OCI-LY7 (cell line): ENCODE measurements at regions of chr22 and their contacts with region 1.

Region 1: DNA sequence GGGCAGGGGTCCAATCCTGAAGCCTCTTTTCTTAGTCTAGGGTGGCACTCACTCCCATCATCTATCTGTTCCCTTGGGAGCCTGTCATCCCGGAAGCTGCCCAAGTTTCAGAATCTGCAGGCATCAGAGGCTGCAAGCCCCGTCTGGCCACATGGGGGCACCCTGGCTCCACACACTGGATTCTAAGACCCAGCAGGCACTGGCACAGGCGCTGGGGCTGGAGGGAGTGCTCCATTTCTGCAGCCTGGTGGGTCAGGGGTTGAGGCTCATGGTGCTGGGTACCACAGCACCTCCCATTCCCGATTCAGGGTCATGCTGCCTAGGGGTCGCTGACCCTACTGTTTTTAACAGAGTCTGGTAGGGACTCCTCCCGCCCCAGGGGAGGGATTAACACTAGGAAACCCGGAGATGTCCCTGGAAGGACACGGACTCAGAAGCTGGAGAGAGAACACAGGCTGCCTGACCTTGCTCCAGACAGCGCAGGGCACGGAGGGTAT is 243.9 kb upstream of the SYN3 start:
- DNase-seq: peak; percentile 91
- H3K4me3 ChIP-seq: peak overlapping the region; percentile 10
- H3K27ac ChIP-seq: peak overlapping the region; percentile 100
- H3K4me1 ChIP-seq: peaks cover 65% of the 10 kb centered on the region
- CTCF ChIP-seq: peak; percentile 99

Region 2: DNA sequence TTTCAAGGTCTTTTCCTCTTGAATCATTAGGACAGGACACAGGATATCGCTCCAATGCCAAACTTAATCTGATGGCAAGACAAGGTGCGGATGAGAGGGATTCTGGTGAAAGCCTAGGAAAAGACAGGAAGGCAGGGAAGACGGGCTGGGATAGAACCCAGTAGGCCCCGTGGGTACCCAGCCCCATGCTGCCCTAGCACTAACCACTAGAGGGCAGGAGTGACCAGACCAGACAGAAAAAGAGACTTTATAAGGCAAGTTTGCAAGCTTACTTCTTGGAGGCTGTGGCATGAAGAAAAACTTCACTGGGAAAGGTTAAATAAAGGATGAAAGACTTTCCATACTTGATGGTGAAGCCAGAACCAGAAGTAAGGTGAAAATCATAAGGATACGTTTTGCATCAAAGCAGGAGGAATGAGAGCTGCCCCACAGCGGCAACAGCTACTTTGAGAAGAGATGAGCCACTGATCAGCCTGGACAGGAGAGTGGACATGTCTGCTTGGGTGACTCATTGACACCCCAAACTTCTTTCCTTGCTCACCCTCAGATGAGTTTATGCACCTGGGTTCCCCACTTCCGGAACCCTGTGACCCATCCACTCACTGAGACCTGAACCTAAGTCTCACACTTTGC is 283.7 kb before region 1 on chr22:
- CTCF ChIA-PET with region 1: no interaction called
- POLR2A ChIA-PET with region 1: no interaction called
- intact Hi-C with region 1: loop called (anchors 2 kb)
- DNase-seq: peak; percentile 71
- H3K4me3 ChIP-seq: no peak overlapping the region
- H3K27ac ChIP-seq: no peak overlapping the region
- H3K4me1 ChIP-seq: peaks cover 18% of the 10 kb centered on the region
- CTCF ChIP-seq: peak; percentile 98

Region 3: GRCh38 chr22:33314316-33314715 is 12.2 kb after region 1 on chr22:
- CTCF ChIA-PET with region 1: interaction called, 13 read pairs
- POLR2A ChIA-PET with region 1: interaction called, 12 read pairs
- intact Hi-C with region 1: loop called (anchors 2 kb)
- DNase-seq: no peak
- H3K4me3 ChIP-seq: no peak overlapping the region
- H3K27ac ChIP-seq: no peak overlapping the region
- H3K4me1 ChIP-seq: peaks cover 31% of the 10 kb centered on the region
- CTCF ChIP-seq: no peak

Region 4: GRCh38 chr22:33389936-33390335 is 87.8 kb after region 1 on chr22:
- CTCF ChIA-PET with region 1: no interaction called
- POLR2A ChIA-PET with region 1: no interaction called
- intact Hi-C with region 1: loop called (anchors 5 kb)
- DNase-seq: no peak
- H3K4me3 ChIP-seq: no peak overlapping the region
- H3K27ac ChIP-seq: no peak overlapping the region
- H3K4me1 ChIP-seq: no peaks in the 10 kb centered on the region
- CTCF ChIP-seq: no peak

Region 5: DNA sequence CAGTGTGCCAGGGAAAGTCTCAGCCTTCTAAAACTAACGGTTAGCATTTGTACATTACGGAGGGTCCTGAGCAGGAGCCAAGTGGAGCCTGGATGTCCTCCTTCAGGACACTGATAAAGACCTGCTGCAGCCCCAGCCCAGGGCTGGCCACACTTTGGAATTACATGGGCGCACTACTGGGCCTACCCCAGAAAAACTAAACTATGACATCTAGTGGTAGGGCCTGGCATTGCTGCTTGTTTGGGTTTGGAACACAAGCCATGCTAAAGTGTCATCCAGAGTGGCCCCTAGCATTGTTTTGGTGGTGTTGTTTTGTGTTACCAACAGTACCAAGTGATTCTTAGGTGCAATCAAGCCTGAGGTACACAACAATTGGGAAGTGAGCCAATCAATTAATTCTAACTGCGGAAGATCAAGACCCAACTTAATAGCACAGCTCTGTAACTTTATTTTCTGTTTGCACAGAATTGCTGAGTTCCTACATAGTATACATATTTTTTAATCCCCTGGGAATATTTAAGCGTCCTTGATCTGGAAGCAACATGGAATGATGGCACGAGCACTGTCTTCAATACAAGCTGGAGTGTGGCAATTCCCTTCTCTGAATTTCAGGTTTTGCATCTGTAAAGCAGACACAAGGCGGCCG is 277.5 kb after region 1 on chr22:
- CTCF ChIA-PET with region 1: interaction called, 5 read pairs
- POLR2A ChIA-PET with region 1: interaction called, 4 read pairs
- intact Hi-C with region 1: loop called (anchors 1 kb)
- DNase-seq: peak; percentile 80
- H3K4me3 ChIP-seq: no peak overlapping the region
- H3K27ac ChIP-seq: no peak overlapping the region
- H3K4me1 ChIP-seq: peaks cover 52% of the 10 kb centered on the region
- CTCF ChIP-seq: peak; percentile 98

Region 6: DNA sequence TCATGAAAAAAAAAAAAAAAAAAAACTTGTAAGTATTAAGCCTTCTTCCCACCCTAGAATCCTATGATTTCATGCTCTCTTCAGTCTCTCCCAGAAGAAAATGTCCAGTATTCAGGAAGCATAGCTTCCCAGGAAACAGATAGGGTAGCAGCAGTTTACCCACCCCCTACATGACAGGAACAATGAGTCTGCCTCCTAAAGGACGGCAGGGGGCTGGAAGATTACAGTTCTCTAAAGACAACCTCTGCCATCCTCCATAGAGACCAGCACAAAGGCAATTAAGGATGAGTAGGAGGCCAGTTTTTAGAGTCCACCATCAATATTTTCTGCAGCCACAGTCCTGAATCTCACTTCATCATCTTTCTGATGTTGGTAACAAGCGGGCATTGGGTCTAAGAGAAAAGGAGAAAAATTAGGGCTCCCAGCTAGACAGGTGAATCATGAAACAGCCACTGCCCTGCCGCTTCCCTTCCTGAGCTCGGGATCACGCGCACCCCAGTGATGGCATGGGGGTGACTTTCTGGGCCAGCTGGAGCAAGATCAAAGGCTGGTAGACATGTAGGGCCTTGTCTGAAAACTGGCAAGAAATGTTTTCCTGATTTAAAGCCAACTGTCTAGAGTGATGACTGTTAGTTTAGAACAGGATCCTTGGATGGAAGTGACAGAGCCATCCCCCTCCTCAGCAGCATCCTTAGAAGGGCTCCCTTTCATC is 295.3 kb after region 1 on chr22:
- CTCF ChIA-PET with region 1: no interaction called
- POLR2A ChIA-PET with region 1: no interaction called
- intact Hi-C with region 1: no loop called
- DNase-seq: no peak
- H3K4me3 ChIP-seq: no peak overlapping the region
- H3K27ac ChIP-seq: no peak overlapping the region
- H3K4me1 ChIP-seq: no peaks in the 10 kb centered on the region
- CTCF ChIP-seq: no peak

Region 7: GRCh38 chr22:33920927-33921524 is 618.9 kb after region 1 on chr22:
- CTCF ChIA-PET with region 1: interaction called, 7 read pairs
- POLR2A ChIA-PET with region 1: interaction called, 4 read pairs
- intact Hi-C with region 1: loop called (anchors 1 kb)
- DNase-seq: peak; percentile 97
- H3K4me3 ChIP-seq: peak overlapping the region; percentile 74
- H3K27ac ChIP-seq: no peak overlapping the region
- H3K4me1 ChIP-seq: peaks cover 41% of the 10 kb centered on the region
- CTCF ChIP-seq: no peak